Thyroid gland (tissue), 4 donors: ENCODE measurements at regions of chr3 and their contacts with region 1.

Region 1: GRCh38 chr3:30199096-30199759 is 407.2 kb upstream of the TGFBR2 start:
- DNase-seq: peak; percentile 60 to 75
- H3K4me3 ChIP-seq: no peak overlapping the region
- H3K27ac ChIP-seq: no peak overlapping the region
- H3K4me1 ChIP-seq: no peaks in the 10 kb centered on the region
- H3K27me3 ChIP-seq: no peaks in the 10 kb centered on the region
- CTCF ChIP-seq: peak; percentile 73 to 88 (median 82)
- POLR2A ChIP-seq: no peak

Region 2: GRCh38 chr3:30035935-30036567 is 163.2 kb before region 1 on chr3:
- intact Hi-C with region 1: loop called (anchors 10 kb)
- DNase-seq: no peak
- H3K4me3 ChIP-seq: no peak overlapping the region
- H3K27ac ChIP-seq: no peak overlapping the region
- H3K4me1 ChIP-seq: no peaks in the 10 kb centered on the region
- H3K27me3 ChIP-seq: no peaks in the 10 kb centered on the region
- CTCF ChIP-seq: no peak
- POLR2A ChIP-seq: no peak

Region 3: DNA sequence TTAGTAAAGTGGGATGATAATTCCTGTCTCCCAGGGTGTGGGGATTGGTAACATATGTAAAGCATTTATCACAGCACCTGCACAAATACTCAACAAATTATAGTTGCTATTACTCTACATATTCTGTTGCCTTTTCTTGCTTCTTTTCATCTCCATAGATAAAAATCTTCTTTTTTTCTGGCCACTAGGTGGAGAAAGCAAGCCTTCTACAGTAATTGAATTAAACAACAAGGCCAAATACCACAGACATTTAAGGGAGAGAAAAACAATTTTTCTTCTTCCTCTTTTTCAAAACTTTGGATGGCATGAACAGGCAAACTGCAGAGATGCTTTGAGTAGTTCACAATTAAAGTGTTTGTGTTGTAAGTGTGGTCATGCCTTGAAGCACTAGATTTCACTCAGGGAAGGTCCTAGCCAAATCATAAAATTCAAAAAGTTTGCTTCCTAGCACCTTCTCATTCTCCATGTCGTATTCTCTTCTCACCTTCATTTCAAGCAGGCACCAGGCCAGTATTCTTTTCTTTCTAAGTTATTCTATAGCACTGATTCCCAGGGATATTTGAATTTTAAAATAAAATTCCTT is 86.2 kb before region 1 on chr3:
- intact Hi-C with region 1: loop called (anchors 10 kb)
- DNase-seq: no peak
- H3K4me3 ChIP-seq: no peak overlapping the region
- H3K27ac ChIP-seq: no peak overlapping the region
- H3K4me1 ChIP-seq: no peaks in the 10 kb centered on the region
- H3K27me3 ChIP-seq: no peaks in the 10 kb centered on the region
- CTCF ChIP-seq: peak; percentile 20 to 61 (median 47)
- POLR2A ChIP-seq: no peak

Region 4: DNA sequence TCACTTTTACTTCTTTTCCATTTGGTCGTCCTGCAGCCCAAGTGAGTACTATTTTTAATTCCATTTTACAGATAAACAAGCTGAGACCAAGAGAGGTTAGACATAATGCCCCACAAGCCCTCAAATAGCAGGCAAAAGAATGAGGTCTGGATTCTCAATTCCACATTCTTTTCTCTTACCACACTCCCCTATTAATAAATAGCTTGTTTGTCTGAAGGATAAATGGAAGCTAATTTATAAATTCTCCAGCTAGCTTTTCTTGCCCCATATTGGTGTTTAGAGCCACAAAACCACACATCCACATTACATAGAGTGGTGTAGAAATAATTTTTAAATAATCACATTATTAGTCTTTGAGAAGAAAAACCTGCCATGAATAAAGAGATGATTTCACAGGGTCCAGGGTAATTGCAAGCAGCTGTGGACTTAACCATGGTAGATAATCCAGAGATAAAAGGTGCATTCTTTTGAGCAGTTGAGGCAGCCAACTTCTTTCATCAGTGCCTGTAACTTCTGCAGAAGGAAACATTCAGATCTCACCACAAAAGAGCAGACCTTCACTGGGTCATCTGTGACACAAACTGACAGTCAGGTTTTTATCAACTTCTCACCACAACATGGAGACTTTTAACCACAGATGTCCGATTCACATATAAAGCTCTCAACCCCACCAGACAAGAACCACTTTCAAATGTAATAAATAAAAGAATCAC is 1020.1 kb after region 1 on chr3:
- intact Hi-C with region 1: no loop called
- DNase-seq: no peak
- H3K4me3 ChIP-seq: no peak overlapping the region
- H3K27ac ChIP-seq: no peak overlapping the region
- H3K4me1 ChIP-seq: peaks cover 15% of the 10 kb centered on the region in 2 donors
- H3K27me3 ChIP-seq: no peaks in the 10 kb centered on the region
- CTCF ChIP-seq: no peak
- POLR2A ChIP-seq: no peak